K562 (cell line): ENCODE measurements at regions of chr1 and their contacts with region 1.

Region 1: DNA sequence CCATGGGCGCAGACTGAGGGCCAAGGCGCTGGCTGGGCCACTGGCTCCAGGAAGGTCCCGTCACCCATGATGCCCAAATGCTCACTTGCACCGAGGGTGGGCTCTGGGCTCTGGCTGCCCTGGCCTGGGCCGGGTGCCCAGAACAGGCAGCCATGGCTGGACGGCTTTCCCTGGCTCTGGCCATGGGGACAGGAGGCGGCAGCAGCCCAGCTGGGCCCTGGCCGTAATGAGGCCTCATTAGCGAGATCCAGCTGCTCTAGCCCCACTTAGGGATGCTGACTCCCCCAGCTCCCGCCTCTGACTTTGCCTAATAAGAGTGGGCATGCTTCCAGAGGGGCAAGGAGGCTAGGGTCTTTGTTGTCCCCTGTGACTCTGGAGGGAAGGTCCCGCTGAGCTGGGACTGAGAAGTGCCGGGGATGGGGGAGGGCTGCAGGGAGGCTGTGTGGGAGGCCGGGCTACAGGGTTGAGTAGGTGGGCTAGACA is 11.8 kb downstream of the SLC6A9 start:
- DNase-seq: no peak
- ATAC-seq: no peak
- H3K4me3 ChIP-seq: no peak overlapping the region
- H3K27ac ChIP-seq: no peak overlapping the region
- H3K4me1 ChIP-seq: peaks cover 5 to 39% of the 10 kb centered on the region in 2 experiments; a peak in 4 of 5 replicates
- H3K27me3 ChIP-seq: no peaks in the 10 kb centered on the region
- CTCF ChIP-seq: no peak
- EP300 ChIP-seq: no peak
- POLR2A ChIP-seq: no peak
- RAD21 ChIP-seq: no peak

Region 2: GRCh38 chr1:44002606-44003157 is 16.8 kb before region 1 on chr1:
- CTCF ChIA-PET with region 1: no interaction called
- POLR2A ChIA-PET with region 1: interaction called, 15 read pairs
- in situ Hi-C with region 1: no loop called
- intact Hi-C with region 1: no loop called
- DNase-seq: no peak
- ATAC-seq: no peak
- H3K4me3 ChIP-seq: no peak overlapping the region
- H3K27ac ChIP-seq: no peak overlapping the region
- H3K4me1 ChIP-seq: peaks cover 0 to 49% of the 10 kb centered on the region in 2 experiments; a peak in 3 of 5 replicates
- H3K27me3 ChIP-seq: no peaks in the 10 kb centered on the region
- CTCF ChIP-seq: peak; percentile 20 to 50 (median 48); a peak in 4 of 6 replicates
- EP300 ChIP-seq: no peak
- POLR2A ChIP-seq: no peak
- RAD21 ChIP-seq: no peak

Region 3: GRCh38 chr1:44029906-44030604 is 10.5 kb after region 1 on chr1:
- CTCF ChIA-PET with region 1: no interaction called
- POLR2A ChIA-PET with region 1: interaction called, 29 read pairs
- in situ Hi-C with region 1: no loop called
- intact Hi-C with region 1: no loop called
- DNase-seq: peak; percentile 95 to 96 (median 96)
- ATAC-seq: peak; percentile 85
- H3K4me3 ChIP-seq: peak overlapping the region; percentile 82
- H3K27ac ChIP-seq: peak overlapping the region; percentile 84
- H3K4me1 ChIP-seq: peaks cover 43 to 61% of the 10 kb centered on the region in 2 experiments
- H3K27me3 ChIP-seq: no peaks in the 10 kb centered on the region
- CTCF ChIP-seq: no peak
- EP300 ChIP-seq: peak; percentile 63
- POLR2A ChIP-seq: peak; percentile 61
- RAD21 ChIP-seq: no peak